Posterior cingulate gyrus (tissue), 11 donors: ENCODE measurements at regions of chr7 and their contacts with region 1.

Region 1: DNA sequence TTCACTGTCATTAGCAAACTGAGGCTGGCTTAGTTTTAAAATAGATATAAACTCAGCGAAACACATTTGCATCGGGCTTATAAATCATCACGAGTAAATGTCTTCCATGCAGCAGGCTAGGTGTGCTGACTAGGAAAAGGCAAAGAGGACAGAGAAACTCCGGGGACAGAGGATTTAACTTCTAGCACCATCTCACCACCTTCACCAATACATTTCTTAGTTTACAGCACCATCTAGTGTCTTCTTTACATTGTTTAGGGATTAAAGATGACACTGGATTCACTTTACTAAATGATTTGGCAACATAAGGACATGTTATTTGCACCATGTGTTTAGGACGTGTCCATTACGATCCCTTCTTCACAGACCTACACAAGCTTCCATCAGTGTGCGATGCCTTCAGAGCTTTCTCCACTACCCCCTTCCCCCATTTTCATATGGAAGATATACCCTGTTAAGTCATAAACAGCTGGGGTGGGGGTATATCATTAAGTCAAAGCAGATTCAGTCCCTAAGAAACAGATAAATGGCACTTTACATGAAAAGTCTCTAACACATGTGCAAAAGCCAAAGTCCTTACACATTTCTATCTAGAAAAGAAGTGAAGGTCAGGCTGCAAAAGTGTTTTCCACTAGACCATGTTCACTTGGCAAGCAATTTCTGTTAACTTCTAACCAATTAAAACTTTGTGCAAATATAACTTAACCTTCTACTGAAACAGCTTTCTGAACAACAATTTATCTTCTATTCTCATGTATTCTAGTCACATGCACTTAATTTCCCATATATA is 103.3 kb downstream of the GRB10 start:
- DNase-seq: no peak

Region 2: DNA sequence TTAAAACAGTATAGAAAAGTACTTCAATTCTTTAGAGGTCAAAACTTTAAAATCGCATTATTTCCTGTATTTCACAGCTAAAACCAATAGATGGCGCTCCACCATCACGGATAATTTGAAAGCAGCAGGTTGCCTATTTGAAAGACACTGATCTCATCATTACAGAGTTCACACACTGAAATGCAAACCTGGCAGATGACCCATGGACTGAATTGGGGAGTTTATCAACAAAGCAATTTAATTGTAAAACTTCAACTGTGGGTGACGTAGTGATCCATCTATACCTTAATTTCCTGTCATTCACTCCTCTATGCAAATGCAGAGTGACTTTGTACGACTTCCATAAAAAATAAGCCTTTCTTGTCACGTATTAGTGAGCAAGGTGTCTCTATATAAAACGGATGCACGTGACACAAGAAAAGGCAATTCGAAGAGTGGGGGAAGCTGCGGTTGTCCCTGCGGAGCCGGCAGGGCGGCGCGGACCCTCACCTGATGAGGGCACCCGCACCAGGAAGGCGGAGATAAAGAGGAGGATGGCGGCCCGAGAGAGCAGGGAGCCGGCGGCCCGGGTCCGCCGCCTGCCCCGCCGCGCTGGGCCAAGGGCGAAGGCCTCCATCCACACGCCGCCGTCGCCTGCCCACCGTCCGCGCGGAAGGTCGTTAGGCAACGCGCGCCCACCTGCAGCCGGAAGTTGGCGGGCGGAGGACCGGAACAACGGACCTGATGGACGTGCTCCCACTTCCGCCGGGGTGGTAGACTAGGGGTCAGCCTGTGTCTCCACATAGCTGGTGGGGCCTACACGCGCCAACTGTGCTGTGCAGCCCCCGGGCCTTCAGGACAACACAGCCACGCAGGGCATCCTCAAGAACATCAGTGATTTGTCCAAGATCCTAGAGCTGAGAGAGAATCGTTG is 586.6 kb before region 1 on chr7 and contains the start of gene ZPBP:
- intact Hi-C with region 1: loop called (anchors 5 kb)
- DNase-seq: peak in 8 of 10 donors; percentile 15 to 87 (median 38)

Region 3: GRCh38 chr7:50467817-50468610 is 211.4 kb before region 1 on chr7:
- intact Hi-C with region 1: loop called (anchors 1 kb)
- DNase-seq: peak; percentile 62 to 97 (median 83)

Region 4: DNA sequence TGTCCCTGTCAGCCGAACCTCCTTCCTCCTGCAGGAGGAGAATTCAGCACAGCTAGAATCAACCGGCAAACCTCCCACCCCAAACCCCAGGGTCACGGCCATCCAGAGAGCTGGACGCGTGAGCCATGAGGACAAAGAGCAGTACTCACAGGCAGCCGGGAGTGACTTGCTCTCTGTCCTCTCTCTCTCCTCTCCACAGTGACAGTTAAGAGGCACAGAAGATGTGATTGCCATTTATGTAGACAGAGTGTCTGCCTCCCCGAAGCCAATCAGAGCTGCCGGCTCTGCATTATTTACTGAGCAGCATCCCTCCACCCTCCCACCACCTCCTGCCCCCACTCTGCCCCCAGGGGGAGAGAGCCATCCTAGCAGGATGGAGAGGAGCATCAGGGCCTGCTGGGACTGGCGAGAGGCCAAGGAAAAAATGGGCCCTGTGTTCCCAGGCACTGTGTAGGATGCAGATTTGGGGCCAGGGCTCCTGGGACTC is 118.5 kb before region 1 on chr7:
- intact Hi-C with region 1: no loop called
- DNase-seq: peak in 1 of 10 donors; percentile 64

Region 5: DNA sequence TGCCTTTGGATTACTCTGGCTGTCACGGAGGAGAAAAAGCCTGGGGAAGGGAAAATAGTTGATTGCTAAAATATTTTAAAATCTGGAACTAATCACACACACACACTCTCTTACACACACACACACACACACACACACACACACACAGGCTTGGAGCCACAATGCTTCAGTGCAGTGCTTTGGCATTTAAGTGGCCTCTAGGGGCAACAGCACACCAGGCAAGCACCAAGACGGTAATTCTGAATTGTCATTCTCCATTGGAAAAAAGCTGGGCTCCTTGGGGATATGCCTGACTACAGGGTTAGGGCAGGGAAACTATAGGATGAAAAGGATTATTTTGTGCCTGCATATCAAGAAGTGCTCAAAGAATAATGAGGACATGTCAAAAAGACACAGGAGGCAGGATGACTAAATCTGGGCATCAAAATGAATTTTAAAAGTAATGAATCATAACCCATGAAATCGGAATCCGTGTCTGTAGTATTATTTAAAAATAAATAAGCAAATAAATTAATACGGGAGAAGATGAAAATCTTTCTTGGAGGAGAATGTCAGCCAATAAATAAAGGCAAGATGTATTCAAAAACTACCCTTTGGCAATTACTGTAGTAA is 83.8 kb before region 1 on chr7:
- intact Hi-C with region 1: loop called (anchors 5 kb)
- DNase-seq: peak in 5 of 10 donors; percentile 35 to 88 (median 37)

Region 6: DNA sequence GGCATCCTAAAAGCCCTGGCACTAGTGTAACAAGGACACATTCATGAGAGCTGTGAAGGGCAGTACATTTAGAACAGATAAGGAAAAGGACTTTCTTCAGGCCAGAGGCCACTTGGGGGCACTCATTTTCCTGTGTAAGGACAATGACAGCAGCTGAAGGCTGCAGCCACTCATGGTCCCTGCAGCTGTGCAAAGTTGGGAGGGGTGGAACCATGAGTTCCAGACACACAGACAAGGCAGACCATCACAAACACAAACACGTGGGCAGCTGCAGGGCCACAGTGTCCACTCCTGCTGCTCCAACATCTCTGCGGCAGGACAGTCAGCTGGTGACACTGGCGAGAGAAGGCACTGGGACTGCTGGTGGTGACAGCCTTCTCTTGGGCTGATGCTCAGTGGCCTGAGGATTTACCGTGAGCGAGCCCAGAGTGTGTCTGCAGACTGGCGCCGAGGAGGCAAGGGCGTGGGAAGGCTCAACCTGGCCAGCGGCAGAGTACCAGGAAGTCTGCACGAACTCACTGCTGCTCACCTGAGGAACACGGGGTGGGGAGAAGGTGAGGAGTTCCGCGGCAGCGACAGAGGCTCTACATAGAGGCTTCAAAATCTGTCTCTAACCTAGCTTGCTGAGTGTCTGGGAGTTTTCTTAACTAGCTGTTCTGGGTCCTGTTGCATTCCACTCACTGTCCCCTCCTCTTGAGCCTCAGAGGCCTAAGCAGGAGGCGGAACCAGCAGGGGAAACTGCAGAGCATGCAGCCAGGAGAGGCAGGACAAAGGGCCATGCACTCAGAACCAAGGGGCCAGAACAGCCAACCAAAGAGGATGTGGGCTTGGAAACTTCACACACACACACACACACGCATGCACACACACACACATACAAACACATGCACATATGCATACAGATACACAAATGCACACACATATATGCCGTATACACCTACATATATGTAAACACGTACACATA is 37.7 kb before region 1 on chr7:
- intact Hi-C with region 1: loop called (anchors 1 kb)
- DNase-seq: peak; percentile 72 to 98 (median 84)

Region 7: DNA sequence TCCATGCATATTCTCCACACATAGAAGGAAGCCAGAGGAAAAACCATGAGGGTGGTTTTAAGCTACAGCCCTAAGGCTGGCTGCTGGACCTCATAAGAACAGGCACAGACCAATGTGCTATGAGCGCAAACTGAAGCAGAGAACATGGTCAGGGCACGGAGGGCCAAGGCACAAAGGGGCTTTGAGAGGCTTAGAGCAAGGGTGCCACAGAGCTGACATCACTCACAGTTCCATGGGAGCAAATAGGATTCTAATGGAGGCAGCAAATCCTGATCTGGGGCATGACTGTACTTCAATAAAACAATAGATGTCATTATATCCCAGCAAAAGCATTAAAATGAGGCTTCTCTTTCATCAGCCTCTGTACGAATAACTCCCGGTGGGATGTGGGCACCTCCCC is 474.8 kb after region 1 on chr7:
- intact Hi-C with region 1: loop called (anchors 10 kb)
- DNase-seq: peak in 8 of 10 donors; percentile 50 to 96 (median 68)